ENCODE measurements at regions of chr7 and their contacts with region 1.

Region 1: GRCh38 chr7:117750612-117751563 is 122.4 kb downstream of the CTTNBP2 start:
- DNase-seq: no peak
- H3K4me3 ChIP-seq: no peak overlapping the region
- H3K27ac ChIP-seq: no peak overlapping the region
- H3K4me1 ChIP-seq: no peaks in the 10 kb centered on the region
- H3K27me3 ChIP-seq: no peaks in the 10 kb centered on the region
- CTCF ChIP-seq: peak in 5 of 6 experiments; percentile 39 to 73 (median 64)
- POLR2A ChIP-seq: no peak

Region 2: GRCh38 chr7:117800406-117800805 is 49.5 kb after region 1 on chr7:
- intact Hi-C with region 1: no loop called
- DNase-seq: no peak
- H3K4me3 ChIP-seq: no peak overlapping the region
- H3K27ac ChIP-seq: peak overlapping the region in 2 of 3 donors; percentile 25 to 50
- H3K4me1 ChIP-seq: peaks cover 7 to 15% of the 10 kb centered on the region in 2 donors
- H3K27me3 ChIP-seq: no peaks in the 10 kb centered on the region
- CTCF ChIP-seq: no peak
- POLR2A ChIP-seq: no peak

Region 3: GRCh38 chr7:117873310-117874190 is 122.7 kb after region 1 on chr7 and contains the start of gene CTTNBP2:
- intact Hi-C with region 1: loop called (anchors 10 kb)
- DNase-seq: peak; percentile 56 to 63
- H3K4me3 ChIP-seq: peak within 1 kb of the TSS; percentile 75 to 90 (median 78)
- H3K27ac ChIP-seq: peak within 1 kb of the TSS; percentile 61 to 91 (median 81)
- H3K4me1 ChIP-seq: no peaks in the 10 kb centered on the region
- H3K27me3 ChIP-seq: no peaks in the 10 kb centered on the region
- CTCF ChIP-seq: peak in 2 of 6 experiments; percentile 22 to 23
- POLR2A ChIP-seq: peak in 1 of 2 donors; percentile 42
- total RNA-seq, gene CTTNBP2: 13.8 to 19.4 (median 17.6) TPM

Region 4: DNA sequence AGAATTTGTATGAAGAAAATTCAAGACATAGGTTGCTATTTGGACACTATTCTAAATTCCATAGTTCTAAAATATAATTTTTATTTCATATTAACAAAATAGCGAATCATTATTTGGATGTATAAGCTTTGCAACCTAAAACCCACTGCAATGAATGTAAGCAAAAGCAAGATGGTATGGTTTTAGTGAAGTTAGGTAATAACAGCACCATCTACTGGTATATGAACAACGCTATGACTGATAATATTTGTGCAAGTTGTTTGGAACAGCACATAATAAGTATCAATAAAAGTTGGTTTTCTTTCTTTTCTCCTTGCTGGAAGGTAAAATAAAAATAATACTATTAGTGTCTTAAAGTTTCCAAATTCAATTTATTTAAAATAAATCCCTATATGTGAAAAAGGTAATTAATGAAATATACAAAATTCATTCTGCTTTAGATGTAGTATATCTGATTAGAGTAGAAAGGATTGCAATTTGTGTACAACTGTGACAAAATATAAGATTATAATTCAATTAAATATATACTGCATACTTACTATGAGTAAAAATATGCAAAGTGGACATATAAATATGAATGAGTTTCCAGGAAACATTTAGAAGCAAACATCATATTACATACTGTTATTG is 354.0 kb after region 1 on chr7:
- intact Hi-C with region 1: loop called (anchors 10 kb)
- DNase-seq: no peak
- H3K4me3 ChIP-seq: no peak overlapping the region
- H3K27ac ChIP-seq: no peak overlapping the region
- H3K4me1 ChIP-seq: no peaks in the 10 kb centered on the region
- H3K27me3 ChIP-seq: no peaks in the 10 kb centered on the region
- CTCF ChIP-seq: peak in 4 of 6 experiments; percentile 16 to 60 (median 54)
- POLR2A ChIP-seq: no peak

Measured in thyroid gland (tissue), 4 donors.